ENCODE measurements at regions of chr6 and their contacts with region 1.

Region 1: DNA sequence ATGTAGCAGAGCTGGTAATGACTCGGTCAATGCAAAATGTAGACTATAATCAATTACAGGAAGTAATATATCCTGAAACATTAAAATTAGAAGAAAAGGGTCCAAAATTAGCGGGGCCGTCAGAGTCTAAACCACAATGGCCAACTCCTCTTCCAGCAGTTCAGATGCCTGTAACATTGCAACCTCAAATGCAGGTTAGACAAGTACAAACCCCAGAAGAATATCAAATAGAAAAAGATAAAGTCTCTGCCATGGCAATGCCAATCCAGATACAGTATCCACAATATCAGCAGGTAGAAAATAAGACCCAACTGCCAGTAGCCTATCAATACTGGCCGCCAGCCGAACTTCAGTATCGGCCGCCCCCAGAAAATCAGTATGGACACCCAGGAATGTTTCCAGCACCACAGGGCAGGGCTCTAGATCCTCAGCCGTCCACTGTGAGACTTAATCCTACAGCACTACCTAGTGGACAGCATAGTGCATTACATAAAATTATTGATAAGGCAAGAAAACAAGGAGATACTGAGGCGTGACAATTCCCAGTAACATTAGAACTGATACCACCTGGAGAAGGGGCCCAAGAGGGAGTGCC is 158.4 kb downstream of the GPX5 start:
- DNase-seq: peak; percentile 72

Region 2: GRCh38 chr6:28606424-28607400 is 77.3 kb before region 1 on chr6:
- in situ Hi-C with region 1: no loop called
- DNase-seq: peak; percentile 89

Region 3: DNA sequence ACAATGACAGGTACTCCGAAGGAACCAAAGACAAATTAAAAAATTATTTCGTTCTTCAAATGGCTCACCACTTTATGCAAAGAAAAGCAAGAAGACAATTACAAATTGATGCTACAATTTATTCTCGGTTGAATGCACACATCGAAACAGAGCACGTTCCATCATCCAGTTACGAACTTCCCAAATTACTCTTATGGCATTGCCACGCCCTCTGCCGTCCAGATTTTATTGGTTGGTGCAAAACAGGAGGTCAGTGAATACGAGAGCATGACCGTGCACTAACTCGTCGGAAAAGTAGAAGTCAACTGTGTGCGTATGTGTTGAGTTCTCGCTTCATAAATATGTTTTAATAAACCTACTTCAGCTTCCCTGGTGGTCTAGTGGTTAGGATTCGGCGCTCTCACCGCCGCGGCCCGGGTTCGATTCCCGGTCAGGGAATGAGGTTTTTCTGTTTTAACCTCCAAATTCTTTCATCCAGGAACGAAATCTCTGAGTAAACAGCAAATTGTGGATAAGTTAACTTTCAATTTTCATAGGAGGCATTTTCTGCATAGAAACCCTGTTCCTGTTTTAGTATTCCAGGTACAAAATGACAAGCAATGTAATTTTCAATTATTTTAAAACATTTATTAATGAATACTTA is 297.9 kb after region 1 on chr6:
- in situ Hi-C with region 1: loop called (anchors 25 kb)
- DNase-seq: peak; percentile 97

Measured in KBM-7 (cell line).